A549 (cell line): ENCODE measurements at regions of chr5 and their contacts with region 1.

Region 1: DNA sequence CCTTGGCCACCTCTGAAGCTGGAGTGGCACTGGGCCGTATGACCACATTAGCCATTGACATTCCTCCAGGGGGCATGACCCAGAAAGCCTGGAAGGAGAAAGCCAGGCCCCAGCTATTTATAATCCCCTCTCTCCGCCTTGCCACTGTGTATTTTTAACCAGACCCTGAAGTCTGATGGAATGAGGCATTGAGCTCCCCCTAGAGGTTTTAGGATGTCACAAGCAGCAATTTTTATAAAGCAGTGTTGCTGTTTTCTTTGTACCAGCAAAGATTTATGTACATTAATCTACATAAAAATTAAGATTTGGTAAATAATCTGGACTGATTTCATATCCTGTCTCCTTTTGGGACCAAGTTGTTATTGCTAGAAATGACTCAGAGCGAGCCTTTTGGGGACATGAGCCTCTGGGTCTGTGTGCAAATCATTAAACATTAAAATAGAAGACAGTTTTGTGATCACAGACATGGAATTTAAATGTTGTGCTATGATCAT is 127.1 kb downstream of the TRIO start:
- DNase-seq: peak; percentile 74 to 76
- ATAC-seq: peak; percentile 65 to 66
- H3K4me3 ChIP-seq: no peak overlapping the region
- H3K27ac ChIP-seq: peak overlapping the region; percentile 66 to 84
- H3K4me1 ChIP-seq: peaks cover 83% of the 10 kb centered on the region
- CTCF ChIP-seq: peak; percentile 88
- EP300 ChIP-seq: no peak
- POLR2A ChIP-seq: no peak
- RAD21 ChIP-seq: peak; percentile 87 to 89

Region 2: DNA sequence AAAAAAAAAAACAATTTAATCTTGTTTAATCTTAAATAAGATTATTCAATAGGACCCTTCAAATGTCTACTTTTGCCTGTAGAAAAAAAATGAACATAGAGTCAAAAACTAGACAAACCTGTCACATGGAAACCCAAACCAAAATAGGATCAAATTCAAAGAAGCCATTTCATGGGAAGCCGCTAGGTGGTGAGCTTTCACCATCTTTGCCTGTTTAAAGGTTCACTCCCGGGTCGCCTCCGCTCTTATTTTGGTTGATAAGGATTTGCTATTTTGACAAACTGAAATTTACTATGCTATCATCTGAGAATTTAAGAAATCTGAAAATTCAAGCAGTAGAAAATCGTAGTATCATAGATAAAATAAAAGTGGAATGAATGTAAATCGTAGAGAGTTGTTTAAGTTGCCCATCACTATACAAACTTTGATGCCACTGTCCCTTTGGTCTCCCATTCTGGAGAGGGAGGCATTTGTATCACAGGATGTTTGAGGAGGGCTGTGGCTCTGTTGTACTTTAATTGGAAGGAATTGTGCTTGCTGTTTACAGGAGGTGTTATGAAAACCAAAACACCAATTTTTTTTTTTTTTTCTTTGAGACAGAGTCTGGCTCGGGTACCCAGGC is 282.3 kb before region 1 on chr5:
- CTCF ChIA-PET with region 1: interaction called, 53 read pairs
- POLR2A ChIA-PET with region 1: no interaction called
- DNase-seq: peak; percentile 71 to 74
- ATAC-seq: peak in 1 of 2 experiments; percentile 68; a peak in 3 of 6 replicates
- H3K4me3 ChIP-seq: no peak overlapping the region
- H3K27ac ChIP-seq: peak overlapping the region; percentile 56 to 61; a peak in 4 of 6 replicates
- H3K4me1 ChIP-seq: peaks cover 18% of the 10 kb centered on the region
- CTCF ChIP-seq: peak; percentile 97
- EP300 ChIP-seq: no peak
- POLR2A ChIP-seq: no peak
- RAD21 ChIP-seq: peak; percentile 97

Region 3: GRCh38 chr5:14108170-14108996 is 161.9 kb before region 1 on chr5:
- CTCF ChIA-PET with region 1: interaction called, 26 read pairs
- POLR2A ChIA-PET with region 1: no interaction called
- DNase-seq: peak; percentile 74 to 85
- ATAC-seq: peak; percentile 68 to 88; a peak in 4 of 6 replicates
- H3K4me3 ChIP-seq: no peak overlapping the region
- H3K27ac ChIP-seq: peak overlapping the region; percentile 34 to 63; a peak in 5 of 6 replicates
- H3K4me1 ChIP-seq: peaks cover 36% of the 10 kb centered on the region
- CTCF ChIP-seq: peak; percentile 57
- EP300 ChIP-seq: no peak
- POLR2A ChIP-seq: no peak
- RAD21 ChIP-seq: peak; percentile 68 to 76

Region 4: DNA sequence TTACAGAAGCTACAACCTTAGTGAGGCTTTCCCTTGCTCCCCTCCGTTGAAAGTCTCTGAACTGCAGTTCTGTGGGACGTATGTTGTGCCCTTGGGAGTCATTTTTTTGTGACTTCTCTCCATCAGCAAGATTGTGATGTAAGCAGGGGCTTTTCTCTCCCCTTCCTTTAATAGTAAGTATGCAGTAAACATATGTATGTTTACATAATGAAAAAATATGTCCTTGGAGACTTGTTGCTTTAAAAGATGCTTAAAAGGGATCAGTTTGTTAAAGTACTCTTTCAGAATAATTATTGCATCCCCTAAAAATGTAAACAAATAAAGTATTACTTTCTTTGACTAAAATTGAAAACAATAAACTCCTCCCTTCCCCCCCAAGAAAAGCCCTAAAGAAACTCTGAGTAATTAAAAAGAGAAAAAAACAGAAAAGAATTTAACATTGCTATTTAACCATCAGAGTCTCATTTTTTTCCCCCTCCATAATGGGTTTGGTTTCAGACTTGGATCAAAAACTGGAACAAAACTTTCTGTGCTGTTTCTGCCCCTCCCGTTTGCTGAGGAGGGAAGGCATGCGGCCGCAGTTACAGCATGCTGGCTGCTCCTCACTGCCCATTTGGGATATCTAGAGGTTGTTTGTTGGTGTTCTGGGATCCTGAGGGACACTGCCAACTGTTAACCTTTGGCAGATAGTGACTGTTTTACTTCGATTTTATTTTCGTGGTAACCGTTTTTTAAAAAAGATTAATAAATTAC is 86.9 kb before region 1 on chr5:
- CTCF ChIA-PET with region 1: interaction called, 13 read pairs
- POLR2A ChIA-PET with region 1: interaction called, 6 read pairs
- DNase-seq: no peak
- ATAC-seq: no peak
- H3K4me3 ChIP-seq: no peak overlapping the region
- H3K27ac ChIP-seq: peak overlapping the region; percentile 79 to 92
- H3K4me1 ChIP-seq: peaks cover 100% of the 10 kb centered on the region
- CTCF ChIP-seq: no peak
- EP300 ChIP-seq: no peak
- POLR2A ChIP-seq: no peak
- RAD21 ChIP-seq: no peak

Region 5: DNA sequence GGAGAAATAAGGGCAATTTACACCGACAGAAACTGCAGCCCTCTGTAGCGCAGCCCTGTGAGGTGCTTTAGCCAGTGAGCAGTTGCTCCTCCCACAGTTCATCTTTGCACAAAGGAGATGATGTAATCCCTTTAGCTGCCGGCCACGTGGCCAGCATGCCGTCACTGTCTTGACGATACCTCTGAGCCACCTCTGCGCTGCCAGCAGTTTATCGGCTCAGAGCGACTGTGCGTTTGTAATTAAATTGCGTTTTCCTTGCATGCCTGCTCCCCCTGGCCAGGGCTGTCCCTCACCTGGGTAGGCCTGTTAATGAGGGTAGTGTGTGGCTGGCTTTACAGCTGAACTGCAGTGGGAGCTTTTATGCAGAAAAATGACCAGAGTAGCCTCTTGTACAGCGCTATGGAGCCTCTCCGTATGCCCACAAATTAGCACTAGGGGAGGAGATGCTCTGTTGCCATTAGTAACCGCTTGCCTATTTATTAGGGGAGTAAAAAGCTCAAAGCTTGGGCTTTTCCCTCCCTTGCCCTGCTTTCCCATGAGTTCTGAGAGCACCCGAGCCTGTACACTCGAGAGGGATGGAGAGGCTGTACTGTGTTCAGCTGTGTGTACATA is 20.1 kb before region 1 on chr5:
- CTCF ChIA-PET with region 1: interaction called, 10 read pairs
- POLR2A ChIA-PET with region 1: no interaction called
- DNase-seq: peak in 1 of 2 experiments; percentile 33
- ATAC-seq: peak; percentile 41 to 55; a peak in 3 of 6 replicates
- H3K4me3 ChIP-seq: no peak overlapping the region
- H3K27ac ChIP-seq: peak overlapping the region; percentile 21 to 73; a peak in 4 of 6 replicates
- H3K4me1 ChIP-seq: peaks cover 29% of the 10 kb centered on the region
- CTCF ChIP-seq: no peak
- EP300 ChIP-seq: no peak
- POLR2A ChIP-seq: no peak
- RAD21 ChIP-seq: no peak